IMR-90 (cell line): ENCODE measurements at regions of chr13 and their contacts with region 1.

Region 1: GRCh38 chr13:30408319-30409101 is 13.8 kb upstream of the UBE2L5 start:
- DNase-seq: peak; percentile 79
- ATAC-seq: peak; percentile 89
- H3K4me3 ChIP-seq: peak overlapping the region; percentile 27
- H3K27ac ChIP-seq: no peak overlapping the region
- H3K4me1 ChIP-seq: peaks cover 2% of the 10 kb centered on the region; the same call in 1 of the 2 replicates
- H3K27me3 ChIP-seq: no peaks in the 10 kb centered on the region; the same call in none of the 2 replicates
- CTCF ChIP-seq: peak; percentile 57
- POLR2A ChIP-seq: no peak
- RAD21 ChIP-seq: peak; percentile 56

Region 2: GRCh38 chr13:29892151-29892550 is 516.4 kb before region 1 on chr13:
- CTCF ChIA-PET with region 1: no interaction called
- POLR2A ChIA-PET with region 1: no interaction called
- dilution Hi-C with region 1: no loop called
- in situ Hi-C with region 1: no loop called
- intact Hi-C with region 1: no loop called
- DNase-seq: no peak
- ATAC-seq: no peak
- H3K4me3 ChIP-seq: no peak overlapping the region
- H3K27ac ChIP-seq: no peak overlapping the region
- H3K4me1 ChIP-seq: peaks cover 3% of the 10 kb centered on the region; the same call in 1 of the 2 replicates
- H3K27me3 ChIP-seq: no peaks in the 10 kb centered on the region; the same call in none of the 2 replicates
- CTCF ChIP-seq: no peak
- POLR2A ChIP-seq: no peak
- RAD21 ChIP-seq: no peak

Region 3: GRCh38 chr13:30158774-30159445 is 249.6 kb before region 1 on chr13:
- CTCF ChIA-PET with region 1: no interaction called
- POLR2A ChIA-PET with region 1: no interaction called
- dilution Hi-C with region 1: no loop called
- in situ Hi-C with region 1: no loop called
- intact Hi-C with region 1: no loop called
- DNase-seq: peak; percentile 71
- ATAC-seq: peak; percentile 89
- H3K4me3 ChIP-seq: no peak overlapping the region
- H3K27ac ChIP-seq: no peak overlapping the region
- H3K4me1 ChIP-seq: no peaks in the 10 kb centered on the region
- H3K27me3 ChIP-seq: peaks cover 4% of the 10 kb centered on the region
- CTCF ChIP-seq: peak; percentile 69
- POLR2A ChIP-seq: no peak
- RAD21 ChIP-seq: peak; percentile 67

Region 4: GRCh38 chr13:30572859-30573275 is 164.4 kb after region 1 on chr13:
- CTCF ChIA-PET with region 1: no interaction called
- POLR2A ChIA-PET with region 1: no interaction called
- dilution Hi-C with region 1: no loop called
- in situ Hi-C with region 1: no loop called
- intact Hi-C with region 1: loop called (anchors 1 kb)
- DNase-seq: peak; percentile 57
- ATAC-seq: peak; percentile 58
- H3K4me3 ChIP-seq: peak overlapping the region; percentile 48; the same call in 1 of the 2 replicates
- H3K27ac ChIP-seq: peak overlapping the region; percentile 51; the same call in 1 of the 2 replicates
- H3K4me1 ChIP-seq: peaks cover 10% of the 10 kb centered on the region
- H3K27me3 ChIP-seq: no peaks in the 10 kb centered on the region
- CTCF ChIP-seq: peak; percentile 49
- POLR2A ChIP-seq: no peak
- RAD21 ChIP-seq: peak; percentile 52

Region 5: GRCh38 chr13:30665638-30666037 is 257.1 kb after region 1 on chr13:
- CTCF ChIA-PET with region 1: no interaction called
- POLR2A ChIA-PET with region 1: no interaction called
- dilution Hi-C with region 1: no loop called
- in situ Hi-C with region 1: no loop called
- intact Hi-C with region 1: no loop called
- DNase-seq: no peak
- ATAC-seq: no peak
- H3K4me3 ChIP-seq: no peak overlapping the region
- H3K27ac ChIP-seq: no peak overlapping the region
- H3K4me1 ChIP-seq: no peaks in the 10 kb centered on the region
- H3K27me3 ChIP-seq: no peaks in the 10 kb centered on the region
- CTCF ChIP-seq: no peak
- POLR2A ChIP-seq: no peak
- RAD21 ChIP-seq: no peak